ENCODE measurements at regions of chr1 and their contacts with region 1.

Region 1: DNA sequence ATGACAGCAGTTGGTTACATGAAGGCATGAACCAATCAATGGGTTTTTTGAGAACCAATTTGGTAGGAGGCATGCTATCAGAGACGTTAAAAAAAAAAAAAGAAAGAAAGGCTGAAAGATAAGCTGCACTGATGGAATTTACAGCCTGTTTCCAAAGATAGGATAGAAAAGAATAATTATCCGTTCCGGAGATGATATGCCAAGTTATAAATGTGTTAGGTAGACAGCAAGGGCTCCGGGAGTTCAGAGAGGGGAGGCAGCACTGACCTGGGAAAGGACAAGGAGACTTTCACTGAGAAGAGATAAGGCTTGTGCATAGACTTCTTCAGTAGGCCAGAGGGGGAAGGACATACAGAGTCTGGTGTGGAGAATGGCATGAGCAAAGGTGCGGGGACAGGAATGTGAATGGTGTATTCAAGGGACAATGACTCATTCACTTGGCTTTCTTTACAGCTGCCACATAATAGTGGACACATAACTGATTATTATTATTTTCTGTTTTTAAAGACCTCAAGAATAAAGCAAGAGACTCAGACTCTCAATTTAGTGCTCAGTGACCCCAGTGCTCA is 24.8 kb upstream of the ACBD6 start:
- DNase-seq: no peak
- H3K4me3 Mint-ChIP-seq: no peak overlapping the region
- H3K27ac Mint-ChIP-seq: no peak overlapping the region
- H3K4me1 Mint-ChIP-seq: peaks cover 3% of the 10 kb centered on the region
- H3K27me3 Mint-ChIP-seq: peaks cover 6% of the 10 kb centered on the region

Region 2: GRCh38 chr1:180571832-180572636 is 44.8 kb after region 1 on chr1:
- intact Hi-C with region 1: no loop called
- DNase-seq: no peak
- H3K4me3 Mint-ChIP-seq: peak overlapping the region; percentile 0
- H3K27ac Mint-ChIP-seq: peak overlapping the region; percentile 18
- H3K4me1 Mint-ChIP-seq: peaks cover 24% of the 10 kb centered on the region
- H3K27me3 Mint-ChIP-seq: peaks cover 5% of the 10 kb centered on the region

Region 3: DNA sequence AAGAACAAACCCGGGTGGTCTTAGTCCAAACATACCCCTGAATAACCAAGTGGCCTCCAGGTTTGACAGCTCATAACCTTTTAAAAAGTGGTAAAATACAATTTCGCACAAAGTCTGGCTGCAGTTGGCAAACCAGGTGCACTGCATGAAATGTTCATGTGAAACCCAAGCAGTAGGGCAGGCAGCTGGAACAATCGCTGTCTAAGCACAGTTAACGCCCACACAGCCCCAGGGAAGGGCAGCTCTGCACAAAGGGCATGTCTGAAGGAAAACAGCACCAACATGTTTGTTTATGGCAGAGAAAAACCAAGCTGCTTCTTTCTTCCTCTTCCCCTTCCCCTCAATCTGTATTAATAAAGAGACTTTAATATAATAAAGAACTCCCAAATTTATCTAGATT is 435.0 kb after region 1 on chr1:
- intact Hi-C with region 1: loop called (anchors 5 kb)
- DNase-seq: no peak
- H3K4me3 Mint-ChIP-seq: no peak overlapping the region
- H3K27ac Mint-ChIP-seq: no peak overlapping the region
- H3K4me1 Mint-ChIP-seq: peaks cover 12% of the 10 kb centered on the region
- H3K27me3 Mint-ChIP-seq: no peaks in the 10 kb centered on the region